ENCODE measurements at regions of chr19 and their contacts with region 1.

Region 1: GRCh38 chr19:29771708-29772414 is 39.9 kb upstream of the CCNE1 start:
- DNase-seq: no peak
- H3K4me3 ChIP-seq: no peak overlapping the region
- H3K27ac ChIP-seq: no peak overlapping the region
- H3K4me1 ChIP-seq: peaks cover 0 to 4% (median 0%) of the 10 kb centered on the region in 3 donors
- H3K27me3 ChIP-seq: no peaks in the 10 kb centered on the region
- CTCF ChIP-seq: peak in 5 of 6 experiments; percentile 33 to 61 (median 48)
- POLR2A ChIP-seq: no peak

Region 2: GRCh38 chr19:29680447-29680846 is 91.4 kb before region 1 on chr19:
- intact Hi-C with region 1: no loop called
- DNase-seq: peak; percentile 35
- H3K4me3 ChIP-seq: peak overlapping the region in 1 of 4 donors; percentile 11
- H3K27ac ChIP-seq: peak overlapping the region; percentile 48 to 84 (median 76)
- H3K4me1 ChIP-seq: peaks cover 19 to 82% (median 61%) of the 10 kb centered on the region in 3 donors
- H3K27me3 ChIP-seq: no peaks in the 10 kb centered on the region
- CTCF ChIP-seq: no peak
- POLR2A ChIP-seq: no peak

Region 3: DNA sequence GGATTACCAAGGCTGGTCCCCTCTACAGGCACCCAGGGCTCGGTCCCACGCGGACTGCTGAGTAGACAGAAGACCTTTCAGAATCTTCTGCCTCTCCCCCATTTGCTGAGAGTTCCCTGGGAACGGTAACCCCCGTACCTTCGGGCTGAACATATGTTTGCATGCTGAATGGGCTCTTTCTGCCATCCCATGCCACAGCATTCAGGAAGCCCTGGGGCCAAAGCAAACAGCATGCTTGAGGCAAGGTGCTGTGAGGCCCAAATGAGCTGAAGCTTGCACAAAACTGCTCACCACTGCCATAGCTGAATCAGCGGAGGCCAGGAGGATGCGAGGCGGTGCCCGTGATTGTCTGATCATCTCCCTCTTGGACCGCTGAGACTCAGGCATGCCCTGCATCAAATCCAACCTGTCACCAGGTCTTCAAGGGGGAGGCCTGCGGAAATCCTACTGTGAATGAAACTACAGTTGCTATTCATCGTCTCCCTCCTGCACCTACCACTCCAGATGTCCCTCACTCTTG is 40.5 kb before region 1 on chr19:
- intact Hi-C with region 1: no loop called
- DNase-seq: no peak
- H3K4me3 ChIP-seq: no peak overlapping the region
- H3K27ac ChIP-seq: no peak overlapping the region
- H3K4me1 ChIP-seq: no peaks in the 10 kb centered on the region
- H3K27me3 ChIP-seq: peaks cover 0 to 64% (median 0%) of the 10 kb centered on the region in 4 donors
- CTCF ChIP-seq: no peak
- POLR2A ChIP-seq: no peak

Region 4: DNA sequence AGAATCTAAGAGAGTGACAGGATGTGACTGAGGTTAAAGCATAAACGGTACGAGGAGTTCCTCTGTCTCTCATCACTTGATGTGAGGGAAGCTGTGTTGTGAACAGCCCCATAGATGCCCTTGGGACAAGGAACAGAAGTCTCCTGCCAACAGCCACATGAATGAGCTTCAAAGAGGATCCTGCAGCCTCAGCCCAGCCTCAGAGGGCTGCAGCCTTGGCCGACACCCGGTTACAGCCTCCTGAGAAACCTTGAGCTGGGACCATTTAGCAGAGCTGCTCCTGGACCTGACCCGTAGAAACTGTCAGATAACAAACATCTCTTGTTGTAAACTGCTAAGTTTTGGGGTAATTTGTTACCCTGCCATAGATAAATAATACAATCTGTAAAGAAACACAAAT is 94.2 kb after region 1 on chr19:
- intact Hi-C with region 1: loop called (anchors 5 kb)
- DNase-seq: no peak
- H3K4me3 ChIP-seq: no peak overlapping the region
- H3K27ac ChIP-seq: no peak overlapping the region
- H3K4me1 ChIP-seq: no peaks in the 10 kb centered on the region
- H3K27me3 ChIP-seq: peaks cover 0 to 54% (median 0%) of the 10 kb centered on the region in 4 donors
- CTCF ChIP-seq: no peak
- POLR2A ChIP-seq: no peak